Activated CD4-positive, alpha-beta memory T cell treated with anti-CD3 and anti-CD28 coated beads for 36 hours (primary cell): ENCODE measurements at regions of chr6 and their contacts with region 1.

Region 1: GRCh38 chr6:140809694-140810101 is 1323.0 kb upstream of the GJE1 start:
- DNase-seq: no peak
- H3K4me3 Mint-ChIP-seq: no peak overlapping the region
- H3K27ac Mint-ChIP-seq: no peak overlapping the region
- H3K4me1 Mint-ChIP-seq: peaks cover 7% of the 10 kb centered on the region
- H3K27me3 Mint-ChIP-seq: peaks cover 4% of the 10 kb centered on the region

Region 2: GRCh38 chr6:140774080-140774505 is 35.6 kb before region 1 on chr6:
- CTCF ChIA-PET with region 1: no interaction called
- POLR2A ChIA-PET with region 1: interaction called, 5 read pairs
- intact Hi-C with region 1: loop called (anchors 1 kb)
- DNase-seq: no peak
- H3K4me3 Mint-ChIP-seq: no peak overlapping the region
- H3K27ac Mint-ChIP-seq: no peak overlapping the region
- H3K4me1 Mint-ChIP-seq: peaks cover 12% of the 10 kb centered on the region
- H3K27me3 Mint-ChIP-seq: peaks cover 18% of the 10 kb centered on the region